ENCODE measurements at regions of chr12 and their contacts with region 1.

Region 1: GRCh38 chr12:62435303-62436163 is 31.1 kb upstream of the MON2 start:
- DNase-seq: peak; percentile 61
- ATAC-seq: peak; percentile 74
- H3K4me3 Mint-ChIP-seq: peak overlapping the region; percentile 73
- H3K27ac Mint-ChIP-seq: no peak overlapping the region
- H3K4me1 Mint-ChIP-seq: peaks cover 18% of the 10 kb centered on the region
- H3K27me3 Mint-ChIP-seq: peaks cover 62% of the 10 kb centered on the region

Region 2: GRCh38 chr12:62375603-62376002 is 59.9 kb before region 1 on chr12:
- CTCF ChIA-PET with region 1: no interaction called
- DNase-seq: no peak
- ATAC-seq: peak; percentile 23
- H3K4me3 Mint-ChIP-seq: no peak overlapping the region
- H3K27ac Mint-ChIP-seq: no peak overlapping the region
- H3K4me1 Mint-ChIP-seq: peaks cover 32% of the 10 kb centered on the region
- H3K27me3 Mint-ChIP-seq: no peaks in the 10 kb centered on the region

Region 3: GRCh38 chr12:62466594-62467491 is 31.3 kb after region 1 on chr12 and contains the start of gene MON2:
- CTCF ChIA-PET with region 1: interaction called, 24 read pairs
- DNase-seq: peak; percentile 90
- ATAC-seq: peak; percentile 98
- H3K4me3 Mint-ChIP-seq: peak within 1 kb of the TSS; percentile 89
- H3K27ac Mint-ChIP-seq: peak within 1 kb of the TSS; percentile 94
- H3K4me1 Mint-ChIP-seq: peaks cover 21% of the 10 kb centered on the region
- H3K27me3 Mint-ChIP-seq: no peaks in the 10 kb centered on the region
- total RNA-seq, gene MON2: 39.3 to 53.9 TPM

Region 4: GRCh38 chr12:62537551-62537950 is 102.0 kb after region 1 on chr12:
- CTCF ChIA-PET with region 1: no interaction called
- DNase-seq: no peak
- ATAC-seq: no peak
- H3K4me3 Mint-ChIP-seq: no peak overlapping the region
- H3K27ac Mint-ChIP-seq: no peak overlapping the region
- H3K4me1 Mint-ChIP-seq: peaks cover 3% of the 10 kb centered on the region
- H3K27me3 Mint-ChIP-seq: no peaks in the 10 kb centered on the region

Region 5: DNA sequence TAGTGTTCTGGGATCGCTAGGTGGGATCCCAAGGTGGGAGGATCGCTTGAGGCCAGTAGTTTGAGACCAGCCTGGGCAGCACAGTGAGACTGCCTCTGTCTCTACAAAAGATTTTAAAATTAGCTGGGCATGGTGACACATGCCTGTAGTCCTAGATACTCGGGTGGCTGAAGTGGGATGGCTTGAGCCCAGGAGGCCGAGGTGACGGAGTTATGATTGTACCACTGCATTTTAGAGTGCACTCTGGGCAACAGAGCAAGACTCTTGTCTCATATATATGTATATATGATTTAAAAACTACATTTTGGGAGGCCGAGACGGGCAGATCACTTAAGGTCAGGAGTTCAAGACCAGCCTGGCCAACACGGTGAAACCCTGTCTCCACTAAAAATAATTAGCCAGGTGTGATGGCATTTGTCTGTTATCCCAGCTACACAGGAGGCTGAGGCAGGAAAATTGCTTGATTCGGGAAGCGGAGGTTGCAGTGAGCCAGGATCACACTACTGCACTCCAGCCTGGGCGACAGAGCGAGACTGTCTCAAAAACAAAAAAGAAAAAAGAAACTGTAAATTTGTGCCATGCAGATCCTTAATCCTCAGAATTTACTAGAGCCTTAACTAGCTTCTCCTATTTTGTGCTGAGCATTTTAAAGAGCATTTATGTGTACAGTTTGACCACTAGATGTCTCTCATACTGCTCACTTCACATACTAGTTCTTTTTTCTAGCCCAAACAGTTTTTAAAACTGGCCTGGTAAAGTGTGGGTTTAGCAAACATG is 145.9 kb after region 1 on chr12:
- CTCF ChIA-PET with region 1: interaction called, 12 read pairs
- DNase-seq: no peak
- ATAC-seq: no peak
- H3K4me3 Mint-ChIP-seq: no peak overlapping the region
- H3K27ac Mint-ChIP-seq: no peak overlapping the region
- H3K4me1 Mint-ChIP-seq: no peaks in the 10 kb centered on the region
- H3K27me3 Mint-ChIP-seq: no peaks in the 10 kb centered on the region

Measured in activated CD8-positive, alpha-beta memory T cell treated with anti-CD3 and anti-CD28 coated beads, Interleukin-2, amount 10 ng/mL, durations not matched to agents 7 days and 5 days (primary cell).